Activated naive CD4-positive, alpha-beta T cell treated with anti-CD3 and anti-CD28 coated beads for 36 hours (primary cell): ENCODE measurements at regions of chr9 and their contacts with region 1.

Region 1: DNA sequence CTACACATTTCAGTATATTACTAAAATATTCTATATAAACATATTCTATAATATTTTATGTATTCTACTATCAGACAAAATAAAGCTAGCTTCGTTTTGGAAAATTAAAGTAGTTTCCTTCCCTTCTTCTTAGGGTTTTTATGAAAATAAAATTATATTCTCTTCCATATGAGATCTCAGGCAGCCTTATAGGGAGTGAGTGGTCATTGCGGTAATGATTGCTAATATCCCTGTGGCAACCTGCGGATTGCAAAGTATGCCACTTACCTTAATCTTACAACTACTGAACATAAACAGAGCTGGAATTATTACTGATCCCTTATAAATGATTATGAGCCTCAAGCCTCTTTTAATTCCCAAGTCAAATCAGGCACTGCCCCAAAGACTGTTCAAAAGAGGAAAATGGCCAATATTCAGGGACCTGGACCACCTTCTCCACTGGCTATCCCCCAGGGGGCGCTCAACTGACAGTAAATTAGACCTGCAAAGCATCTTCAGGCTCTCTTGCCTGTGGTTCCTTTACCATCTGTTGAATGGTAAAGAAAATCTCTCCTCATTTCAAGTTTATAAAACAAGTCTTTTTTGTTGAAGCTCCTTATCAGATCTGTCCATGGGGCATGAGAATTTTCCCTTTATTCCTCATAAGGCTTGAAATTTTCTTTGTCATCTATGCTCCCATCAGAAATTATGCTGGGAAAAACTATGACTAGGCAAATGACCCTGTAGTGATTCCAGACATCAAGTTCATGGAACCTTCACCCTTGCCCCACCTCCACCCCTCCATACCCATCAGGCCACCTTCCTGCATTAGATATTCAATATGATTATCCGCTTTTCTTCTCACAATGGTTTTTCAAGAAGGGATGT is 163.9 kb downstream of the CEMIP2 start:
- DNase-seq: peak; percentile 89
- H3K4me3 Mint-ChIP-seq: no peak overlapping the region
- H3K27ac Mint-ChIP-seq: no peak overlapping the region
- H3K4me1 Mint-ChIP-seq: no peaks in the 10 kb centered on the region
- H3K27me3 Mint-ChIP-seq: no peaks in the 10 kb centered on the region

Region 2: GRCh38 chr9:70935856-70936255 is 668.6 kb before region 1 on chr9:
- CTCF ChIA-PET with region 1: no interaction called
- intact Hi-C with region 1: no loop called
- DNase-seq: no peak
- H3K4me3 Mint-ChIP-seq: no peak overlapping the region
- H3K27ac Mint-ChIP-seq: no peak overlapping the region
- H3K4me1 Mint-ChIP-seq: no peaks in the 10 kb centered on the region
- H3K27me3 Mint-ChIP-seq: no peaks in the 10 kb centered on the region

Region 3: GRCh38 chr9:71223953-71224538 is 380.4 kb before region 1 on chr9:
- CTCF ChIA-PET with region 1: no interaction called
- intact Hi-C with region 1: no loop called
- DNase-seq: no peak
- H3K4me3 Mint-ChIP-seq: no peak overlapping the region
- H3K27ac Mint-ChIP-seq: no peak overlapping the region
- H3K4me1 Mint-ChIP-seq: no peaks in the 10 kb centered on the region
- H3K27me3 Mint-ChIP-seq: peaks cover 6% of the 10 kb centered on the region

Region 4: GRCh38 chr9:71285191-71285656 is 319.2 kb before region 1 on chr9:
- CTCF ChIA-PET with region 1: interaction called, 4 read pairs
- intact Hi-C with region 1: loop called (anchors 1 kb)
- DNase-seq: peak; percentile 58
- H3K4me3 Mint-ChIP-seq: no peak overlapping the region
- H3K27ac Mint-ChIP-seq: no peak overlapping the region
- H3K4me1 Mint-ChIP-seq: no peaks in the 10 kb centered on the region
- H3K27me3 Mint-ChIP-seq: peaks cover 7% of the 10 kb centered on the region

Region 5: DNA sequence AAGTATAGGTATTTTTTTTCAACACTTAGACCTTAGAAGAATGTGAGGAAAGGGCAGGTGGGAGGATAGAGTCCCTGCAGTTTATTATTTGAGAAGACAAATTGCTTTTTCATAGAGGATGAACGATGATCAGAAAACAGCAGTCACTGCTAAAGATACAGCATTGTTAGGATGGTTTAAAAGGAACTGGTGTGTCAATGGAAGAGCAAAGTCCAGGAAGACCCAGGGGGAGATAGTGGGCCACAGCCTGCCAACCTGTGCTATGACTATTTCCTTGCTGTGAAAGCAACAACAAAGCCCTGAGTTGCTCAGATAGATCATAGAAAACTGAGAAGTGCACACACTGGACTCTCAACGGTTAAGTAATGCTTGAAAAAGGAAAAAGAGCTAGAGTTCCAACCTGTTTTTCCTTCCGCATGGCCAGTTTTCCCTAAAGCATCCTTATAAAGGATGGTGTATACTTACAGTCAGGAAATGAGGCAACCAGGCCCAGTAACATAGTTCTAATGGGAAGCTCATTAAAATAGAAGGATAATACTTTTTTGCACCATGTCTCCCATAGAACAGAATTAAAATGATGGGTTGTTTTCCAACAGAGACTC is 10.1 kb after region 1 on chr9:
- CTCF ChIA-PET with region 1: interaction called, 20 read pairs
- intact Hi-C with region 1: no loop called
- DNase-seq: no peak
- H3K4me3 Mint-ChIP-seq: no peak overlapping the region
- H3K27ac Mint-ChIP-seq: no peak overlapping the region
- H3K4me1 Mint-ChIP-seq: no peaks in the 10 kb centered on the region
- H3K27me3 Mint-ChIP-seq: no peaks in the 10 kb centered on the region

Region 6: DNA sequence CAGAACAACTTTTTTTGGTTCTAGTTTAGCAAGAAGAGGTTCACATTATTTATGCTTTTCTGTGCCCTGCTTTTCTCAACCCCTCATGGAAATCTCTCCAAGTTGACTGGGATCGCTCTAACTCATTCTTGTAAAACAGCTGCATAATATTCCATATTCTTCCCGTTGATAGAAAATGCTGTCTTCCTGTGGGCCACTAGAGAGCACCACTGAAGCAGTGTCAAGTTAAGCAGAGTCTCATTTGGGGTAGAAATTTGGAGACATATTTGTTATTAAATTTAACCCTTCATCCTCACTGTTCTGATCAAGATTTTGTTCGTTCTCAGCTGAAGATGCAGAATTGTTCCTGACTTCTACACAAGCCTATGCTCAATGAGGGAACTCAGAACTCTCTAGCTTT is 23.8 kb after region 1 on chr9:
- CTCF ChIA-PET with region 1: interaction called, 4 read pairs
- intact Hi-C with region 1: loop called (anchors 1 kb)
- DNase-seq: no peak
- H3K4me3 Mint-ChIP-seq: no peak overlapping the region
- H3K27ac Mint-ChIP-seq: no peak overlapping the region
- H3K4me1 Mint-ChIP-seq: no peaks in the 10 kb centered on the region
- H3K27me3 Mint-ChIP-seq: no peaks in the 10 kb centered on the region

Region 7: DNA sequence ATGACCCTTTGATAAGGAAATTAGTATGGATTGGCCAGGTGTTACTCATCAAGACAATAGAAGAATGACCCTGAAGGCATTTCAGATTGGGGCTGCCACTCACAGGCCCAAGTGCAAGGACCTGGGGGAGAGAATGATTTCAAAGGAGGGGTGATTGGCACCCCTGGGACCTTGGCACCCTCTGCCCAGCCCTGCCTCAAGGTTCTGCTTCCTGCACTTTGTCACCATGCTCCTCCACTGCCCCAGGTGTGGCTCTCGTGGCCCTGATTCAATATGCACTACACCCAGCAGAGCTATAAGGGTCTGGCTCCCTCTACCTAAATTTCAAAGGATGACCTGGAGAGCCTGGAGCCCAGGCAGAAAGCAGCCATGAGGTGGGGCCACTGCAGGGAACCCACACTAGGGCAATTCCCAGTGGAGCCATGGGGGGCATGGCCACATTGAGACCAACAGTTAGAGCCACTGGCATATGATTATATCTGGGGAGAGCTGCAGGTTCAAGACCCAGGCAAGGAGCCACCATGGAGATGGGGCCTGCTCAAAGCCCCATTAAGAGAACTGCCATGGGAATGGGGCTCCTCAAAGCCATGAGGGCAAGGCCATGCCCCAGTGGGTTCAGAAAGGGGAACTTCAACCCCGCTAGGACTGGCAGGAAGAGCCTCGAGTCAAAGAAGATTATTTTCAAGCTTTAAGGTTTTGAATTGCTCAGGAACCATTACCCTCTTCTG is 70.9 kb after region 1 on chr9:
- CTCF ChIA-PET with region 1: no interaction called
- intact Hi-C with region 1: no loop called
- DNase-seq: no peak
- H3K4me3 Mint-ChIP-seq: no peak overlapping the region
- H3K27ac Mint-ChIP-seq: no peak overlapping the region
- H3K4me1 Mint-ChIP-seq: peaks cover 3% of the 10 kb centered on the region
- H3K27me3 Mint-ChIP-seq: no peaks in the 10 kb centered on the region

Region 8: DNA sequence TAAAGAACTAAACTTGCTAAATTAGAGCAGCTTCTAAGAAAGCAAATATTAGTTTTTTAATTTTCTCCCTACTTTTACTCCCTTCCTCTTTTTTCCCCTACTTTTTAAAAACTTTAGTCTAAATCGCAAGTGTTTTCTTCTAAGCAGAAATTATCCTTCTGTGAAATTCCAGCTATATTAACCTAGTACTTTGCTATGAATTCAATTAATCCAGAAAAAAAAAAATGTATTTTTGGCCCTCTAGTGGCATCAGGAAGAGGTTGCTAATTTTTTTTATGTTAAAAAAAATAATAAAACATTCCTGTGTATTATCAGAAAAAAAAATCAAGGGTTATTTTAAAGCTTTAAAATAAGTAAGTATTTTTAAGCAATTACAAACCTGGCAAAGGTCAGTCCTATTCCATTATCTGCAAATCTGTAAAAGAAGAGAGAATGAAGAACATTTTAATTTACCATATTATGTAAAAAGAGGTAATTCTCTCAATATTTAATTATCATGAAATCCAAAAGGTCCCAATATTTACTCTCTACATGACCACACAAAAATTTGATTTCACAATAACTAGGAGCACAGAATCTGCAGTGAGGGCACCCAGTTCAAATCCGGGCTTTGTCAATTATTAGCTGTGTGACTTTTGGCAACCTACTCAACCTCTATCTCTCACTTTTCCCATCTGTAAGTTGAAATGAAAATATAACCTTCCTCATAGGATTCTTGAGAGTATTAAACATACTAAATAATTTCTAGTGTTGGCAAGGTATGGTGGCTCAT is 111.9 kb after region 1 on chr9:
- CTCF ChIA-PET with region 1: interaction called, 20 read pairs
- intact Hi-C with region 1: no loop called
- DNase-seq: no peak
- H3K4me3 Mint-ChIP-seq: no peak overlapping the region
- H3K27ac Mint-ChIP-seq: no peak overlapping the region
- H3K4me1 Mint-ChIP-seq: peaks cover 2% of the 10 kb centered on the region
- H3K27me3 Mint-ChIP-seq: no peaks in the 10 kb centered on the region

Region 9: DNA sequence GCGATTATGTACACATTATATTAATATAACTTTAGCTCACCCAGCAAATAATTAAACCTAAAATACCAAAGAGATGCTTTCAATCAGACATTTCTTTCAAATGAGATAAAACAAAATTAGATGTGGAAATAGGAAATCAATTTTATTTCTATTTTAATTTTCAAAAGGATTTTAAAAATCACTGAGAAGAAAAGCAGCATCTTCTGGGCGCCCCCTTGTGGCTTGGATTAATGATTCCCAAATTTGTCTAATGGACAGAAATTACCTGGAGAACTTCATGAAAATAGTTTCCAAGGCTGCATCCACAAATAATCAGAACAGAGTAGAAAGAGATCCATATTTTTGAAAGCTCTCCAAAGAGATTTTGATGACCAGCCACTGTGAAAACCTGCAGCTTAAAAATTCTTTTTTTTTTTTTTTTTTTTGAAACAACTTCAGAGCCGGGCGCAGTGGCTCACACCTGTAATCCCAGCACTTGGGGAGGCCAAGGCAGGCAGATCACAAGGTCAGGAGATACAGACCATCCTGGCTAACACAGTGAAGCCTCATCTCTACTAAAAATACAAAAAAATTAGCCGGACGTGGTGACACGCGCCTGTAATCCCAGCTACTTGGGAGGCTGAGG is 214.8 kb after region 1 on chr9:
- CTCF ChIA-PET with region 1: interaction called, 26 read pairs
- intact Hi-C with region 1: loop called (anchors 1 kb)
- DNase-seq: peak; percentile 68
- H3K4me3 Mint-ChIP-seq: no peak overlapping the region
- H3K27ac Mint-ChIP-seq: no peak overlapping the region
- H3K4me1 Mint-ChIP-seq: peaks cover 16% of the 10 kb centered on the region
- H3K27me3 Mint-ChIP-seq: no peaks in the 10 kb centered on the region